ENCODE measurements at regions of chr19 and their contacts with region 1.

Region 1: GRCh38 chr19:55503502-55504251 is 15.4 kb downstream of the SSC5D start:
- DNase-seq: peak; percentile 95
- H3K4me3 ChIP-seq: peak overlapping the region in 1 of 3 experiments; percentile 26
- H3K27ac ChIP-seq: no peak overlapping the region
- H3K4me1 ChIP-seq: no peaks in the 10 kb centered on the region
- H3K27me3 ChIP-seq: no peaks in the 10 kb centered on the region
- CTCF ChIP-seq: peak; percentile 96 to 98
- POLR2A ChIP-seq: no peak

Region 2: DNA sequence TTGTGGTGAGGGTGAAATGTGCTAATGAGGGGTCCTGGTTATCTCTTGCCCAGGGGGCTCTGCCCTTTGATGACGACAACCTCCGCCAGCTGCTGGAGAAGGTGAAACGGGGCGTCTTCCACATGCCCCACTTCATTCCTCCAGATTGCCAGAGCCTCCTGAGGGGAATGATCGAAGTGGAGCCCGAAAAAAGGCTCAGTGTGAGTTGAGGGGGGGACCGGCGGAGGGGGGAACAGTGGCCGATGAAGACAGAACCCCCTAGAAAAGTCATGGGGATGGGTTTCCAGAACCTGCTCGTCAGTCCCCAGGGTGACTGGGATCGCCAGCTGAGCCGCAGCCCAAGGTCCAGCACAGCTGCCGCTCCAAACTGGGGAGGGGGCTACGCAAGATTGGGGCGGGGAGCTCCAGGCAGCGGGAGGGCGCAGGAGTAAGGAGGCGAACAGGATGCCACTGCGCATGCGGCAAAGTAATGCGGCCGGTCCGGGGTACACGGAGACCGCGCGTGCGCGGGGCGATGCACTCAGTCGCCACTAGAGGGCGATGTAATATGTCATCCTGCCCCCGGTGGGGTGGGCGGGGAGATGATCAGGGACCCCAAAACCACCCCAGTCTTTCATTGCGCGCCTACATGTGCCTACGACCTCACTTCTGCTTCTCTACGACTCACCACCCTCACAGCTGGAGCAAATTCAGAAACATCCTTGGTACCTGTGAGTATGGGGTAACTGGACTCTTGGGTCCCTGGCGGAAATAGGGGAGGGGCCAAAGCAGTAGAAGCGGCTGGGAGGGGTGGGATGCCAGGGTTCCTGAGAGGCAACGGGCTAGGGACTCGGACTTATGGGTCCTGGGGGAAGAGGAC is 202.0 kb before region 1 on chr19:
- CTCF ChIA-PET with region 1: interaction called, 12 read pairs
- POLR2A ChIA-PET with region 1: no interaction called
- dilution Hi-C with region 1: no loop called
- intact Hi-C with region 1: loop called (anchors 1 kb)
- DNase-seq: peak; percentile 81
- H3K4me3 ChIP-seq: peak overlapping the region in 2 of 3 experiments; percentile 26 to 28
- H3K27ac ChIP-seq: no peak overlapping the region
- H3K4me1 ChIP-seq: no peaks in the 10 kb centered on the region
- H3K27me3 ChIP-seq: peaks cover 0 to 3% of the 10 kb centered on the region in 2 experiments
- CTCF ChIP-seq: peak; percentile 89 to 95
- POLR2A ChIP-seq: no peak

Region 3: DNA sequence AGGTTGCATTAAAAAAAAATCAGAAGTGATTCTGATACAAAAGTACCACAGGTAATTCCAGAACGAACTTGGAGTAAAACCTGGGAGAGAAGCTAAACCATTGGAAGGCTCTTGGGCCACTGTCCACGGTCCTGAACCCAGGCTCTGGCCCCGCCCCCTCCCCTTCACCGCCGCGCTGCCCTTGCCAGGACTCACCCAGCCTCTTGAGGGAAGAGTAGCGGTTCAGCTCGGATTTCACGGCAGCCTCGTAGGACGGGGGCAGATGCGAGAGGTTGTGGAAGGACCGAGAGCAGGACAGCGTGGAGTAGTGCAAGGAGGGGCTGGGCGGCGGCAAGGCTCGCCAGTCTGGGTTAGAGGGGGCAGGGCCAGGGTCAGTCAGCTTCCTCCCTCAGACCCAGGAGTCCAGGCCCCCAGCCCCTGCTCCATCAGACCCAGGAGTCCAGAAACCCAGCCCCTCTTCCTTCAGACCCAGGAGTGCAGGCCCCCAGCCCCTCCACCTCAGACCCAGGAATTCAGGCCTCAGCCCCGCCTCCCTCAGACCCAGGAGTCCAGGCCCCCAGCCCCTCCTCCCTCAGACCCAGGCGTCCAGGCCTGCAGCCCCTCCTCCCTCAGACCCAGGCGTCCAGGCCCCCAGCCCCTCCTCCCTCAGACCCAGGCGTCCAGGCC is 66.1 kb before region 1 on chr19:
- CTCF ChIA-PET with region 1: interaction called, 13 read pairs
- POLR2A ChIA-PET with region 1: no interaction called
- dilution Hi-C with region 1: no loop called
- intact Hi-C with region 1: no loop called
- DNase-seq: peak; percentile 55
- H3K4me3 ChIP-seq: no peak overlapping the region
- H3K27ac ChIP-seq: no peak overlapping the region
- H3K4me1 ChIP-seq: no peaks in the 10 kb centered on the region
- H3K27me3 ChIP-seq: peaks cover 23 to 27% of the 10 kb centered on the region in 2 experiments
- CTCF ChIP-seq: no peak
- POLR2A ChIP-seq: no peak

Region 4: DNA sequence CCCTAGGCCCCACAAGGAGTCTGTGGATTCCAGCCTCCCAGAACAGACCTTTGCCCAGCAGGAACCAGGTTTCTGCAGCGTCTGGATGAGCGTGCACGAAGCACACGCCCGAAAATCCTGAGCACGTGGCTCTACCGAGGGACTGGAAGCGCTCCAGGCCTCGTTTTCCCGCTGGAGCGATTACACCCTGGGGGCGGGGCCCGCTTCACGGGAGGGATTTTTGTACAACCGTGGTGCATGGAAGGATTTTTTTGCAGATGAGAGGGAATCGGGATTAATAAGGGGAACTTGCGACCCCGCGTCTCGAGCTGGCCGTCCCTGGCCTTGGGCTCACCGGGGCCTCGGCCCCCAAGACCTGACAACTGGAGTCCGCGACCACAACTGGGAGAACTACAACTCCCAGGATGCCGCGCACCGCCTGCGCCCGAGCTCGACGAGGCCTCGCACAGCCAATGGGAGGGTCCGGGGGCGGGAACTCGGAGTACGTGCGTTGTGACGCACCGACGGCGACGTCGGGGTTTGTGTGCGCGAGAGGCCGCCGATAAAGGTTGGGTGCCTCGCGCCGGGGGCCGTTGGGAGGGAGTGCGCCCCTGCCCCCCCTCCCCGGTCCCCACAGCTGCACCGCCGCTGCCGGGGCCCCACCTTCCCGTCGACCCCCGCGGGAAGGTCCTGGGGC is 27.4 kb before region 1 on chr19 and contains the start of gene ZNF628:
- CTCF ChIA-PET with region 1: interaction called, 62 read pairs
- POLR2A ChIA-PET with region 1: interaction called, 5 read pairs
- dilution Hi-C with region 1: no loop called
- intact Hi-C with region 1: no loop called
- DNase-seq: peak; percentile 97
- H3K4me3 ChIP-seq: peak within 1 kb of the TSS; percentile 63 to 95 (median 95)
- H3K27ac ChIP-seq: peak within 1 kb of the TSS; percentile 66
- H3K4me1 ChIP-seq: peaks cover 10% of the 10 kb centered on the region
- H3K27me3 ChIP-seq: no peaks in the 10 kb centered on the region
- CTCF ChIP-seq: no peak
- POLR2A ChIP-seq: peak; percentile 28
- total RNA-seq, gene ZNF628: 9.0 and 10.4 TPM in 2 replicates

Region 5: DNA sequence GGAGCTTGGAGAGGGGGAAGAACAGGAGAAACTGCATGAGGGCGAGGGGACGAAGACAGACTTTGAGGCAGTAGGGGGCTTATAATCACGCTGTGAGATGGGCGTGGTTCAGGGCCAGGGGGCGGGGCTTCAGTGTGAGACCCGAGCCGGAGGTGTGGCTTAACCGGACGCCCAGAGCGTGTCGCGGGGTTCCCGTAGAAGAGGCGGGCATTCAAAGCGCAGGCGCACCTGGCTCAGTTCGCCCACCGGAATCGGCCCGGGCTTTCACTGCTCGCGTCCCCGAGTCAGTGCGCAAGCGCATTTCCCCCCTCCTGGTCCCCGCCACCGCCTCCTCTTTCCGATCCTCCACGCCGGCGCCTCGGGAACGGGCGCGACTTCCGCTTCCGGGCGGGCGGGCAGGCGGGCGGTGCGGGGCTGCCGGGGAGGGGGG is 101.5 kb after region 1 on chr19:
- CTCF ChIA-PET with region 1: interaction called, 25 read pairs
- POLR2A ChIA-PET with region 1: no interaction called
- dilution Hi-C with region 1: no loop called
- intact Hi-C with region 1: no loop called
- DNase-seq: peak; percentile 98
- H3K4me3 ChIP-seq: peak overlapping the region in 1 of 3 experiments; percentile 96
- H3K27ac ChIP-seq: peak overlapping the region; percentile 76
- H3K4me1 ChIP-seq: peaks cover 21% of the 10 kb centered on the region
- H3K27me3 ChIP-seq: no peaks in the 10 kb centered on the region
- CTCF ChIP-seq: no peak
- POLR2A ChIP-seq: peak; percentile 59

Measured in endothelial cell of umbilical vein (primary cell).